B cell (primary cell): ENCODE measurements at regions of chr11 and their contacts with region 1.

Region 1: GRCh38 chr11:130069684-130070108 is at the start of gene APLP2:
- DNase-seq: peak; percentile 98
- ATAC-seq: peak; percentile 94
- H3K4me3 ChIP-seq: peak within 1 kb of the TSS; percentile 64 to 90 (median 81)
- H3K4me3 Mint-ChIP-seq: peak within 1 kb of the TSS; percentile 98
- H3K27ac ChIP-seq: peak within 1 kb of the TSS; percentile 58 to 73
- H3K27ac Mint-ChIP-seq: peak within 1 kb of the TSS; percentile 96
- H3K4me1 ChIP-seq: peaks cover 22 to 25% of the 10 kb centered on the region in 2 donors
- H3K4me1 Mint-ChIP-seq: peaks cover 36% of the 10 kb centered on the region
- H3K27me3 ChIP-seq: peaks cover 0 to 3% (median 0%) of the 10 kb centered on the region in 4 experiments
- H3K27me3 Mint-ChIP-seq: peaks cover 10% of the 10 kb centered on the region
- CTCF ChIP-seq: no peak
- total RNA-seq, gene APLP2: 102 and 111 TPM in 2 replicates

Region 2: DNA sequence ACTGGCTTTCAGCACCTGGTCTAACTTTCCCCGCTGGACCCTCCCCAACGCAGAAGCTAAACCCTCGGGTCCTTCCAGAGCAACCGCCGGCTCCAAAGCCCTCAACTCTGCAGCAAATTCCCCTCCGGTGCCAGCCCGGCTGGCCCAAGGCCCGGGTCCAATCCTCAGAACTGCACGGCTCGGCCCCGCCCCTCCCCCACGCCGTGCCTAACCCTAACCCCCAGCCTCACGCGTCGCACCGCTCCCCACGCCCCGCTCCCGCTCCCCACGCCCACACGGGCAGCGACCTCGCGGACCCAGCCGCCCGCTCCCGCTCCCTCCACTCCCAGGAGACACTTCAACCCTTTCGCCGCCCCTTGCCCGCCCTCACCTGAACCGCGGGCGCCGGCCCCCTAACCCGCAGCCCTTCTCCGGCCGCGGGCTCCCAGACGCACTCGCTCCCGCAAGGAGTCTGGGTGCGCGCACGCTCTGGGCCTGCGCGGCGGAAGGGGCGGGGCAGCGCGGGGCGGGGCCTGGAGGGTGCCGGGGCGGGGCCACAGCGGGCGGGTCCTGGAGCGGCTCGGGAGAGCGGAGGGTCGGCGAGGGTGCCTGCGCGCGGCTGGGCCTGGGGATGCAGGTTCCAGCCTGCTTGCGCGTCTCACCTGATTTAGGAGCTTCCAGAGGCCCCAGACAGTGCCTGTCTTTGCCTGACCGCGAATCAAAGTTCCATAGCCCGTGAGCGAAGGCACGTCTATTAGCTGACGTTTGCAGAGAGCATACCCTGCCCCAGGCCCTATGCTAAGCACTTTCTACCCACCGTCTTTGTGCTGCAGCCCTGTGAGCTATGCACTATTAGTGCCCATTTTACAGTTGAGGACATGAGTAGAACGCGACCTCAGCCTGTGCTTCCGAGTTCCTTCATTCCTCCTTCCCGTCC is 174.3 kb before region 1 on chr11 and contains the start of gene NFRKB:
- CTCF ChIA-PET with region 1: no interaction called
- POLR2A ChIA-PET with region 1: no interaction called
- intact Hi-C with region 1: loop called (anchors 1 kb)
- DNase-seq: peak; percentile 86
- ATAC-seq: peak; percentile 97
- H3K4me3 ChIP-seq: peak within 1 kb of the TSS; percentile 71 to 92 (median 79)
- H3K4me3 Mint-ChIP-seq: peak within 1 kb of the TSS; percentile 92
- H3K27ac ChIP-seq: peak within 1 kb of the TSS; percentile 35 to 53
- H3K27ac Mint-ChIP-seq: peak within 1 kb of the TSS; percentile 82
- H3K4me1 ChIP-seq: peaks cover 10 to 14% of the 10 kb centered on the region in 2 donors
- H3K4me1 Mint-ChIP-seq: peaks cover 22% of the 10 kb centered on the region
- H3K27me3 ChIP-seq: no peaks in the 10 kb centered on the region
- H3K27me3 Mint-ChIP-seq: no peaks in the 10 kb centered on the region
- CTCF ChIP-seq: no peak
- total RNA-seq, gene NFRKB: 36.9 and 40.4 TPM in 2 replicates

Region 3: DNA sequence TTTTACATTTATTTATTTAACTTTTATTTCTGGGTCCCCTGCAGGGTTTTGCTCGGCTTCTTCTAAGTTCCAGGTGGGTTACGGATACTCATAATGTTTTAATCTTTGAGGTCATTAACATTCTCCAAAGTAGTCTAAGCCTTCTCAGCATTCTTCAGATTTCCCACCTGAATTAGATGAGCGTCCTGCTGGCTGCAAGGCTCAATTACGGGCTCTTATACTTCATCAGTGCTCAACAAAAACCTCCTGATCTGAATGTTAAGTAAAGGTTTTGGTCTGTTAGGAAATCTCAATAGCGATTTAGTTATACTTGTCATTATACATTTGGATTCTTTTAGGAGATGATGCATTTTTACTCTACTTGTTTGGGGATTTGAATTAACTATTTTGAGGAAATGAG is 147.0 kb before region 1 on chr11:
- CTCF ChIA-PET with region 1: interaction called, 5 read pairs
- POLR2A ChIA-PET with region 1: no interaction called
- intact Hi-C with region 1: loop called (anchors 2 kb)
- DNase-seq: no peak
- ATAC-seq: no peak
- H3K4me3 ChIP-seq: no peak overlapping the region
- H3K4me3 Mint-ChIP-seq: no peak overlapping the region
- H3K27ac ChIP-seq: no peak overlapping the region
- H3K27ac Mint-ChIP-seq: no peak overlapping the region
- H3K4me1 ChIP-seq: peaks cover 0 to 8% of the 10 kb centered on the region in 2 donors
- H3K4me1 Mint-ChIP-seq: peaks cover 4% of the 10 kb centered on the region
- H3K27me3 ChIP-seq: no peaks in the 10 kb centered on the region
- H3K27me3 Mint-ChIP-seq: no peaks in the 10 kb centered on the region
- CTCF ChIP-seq: no peak

Region 4: DNA sequence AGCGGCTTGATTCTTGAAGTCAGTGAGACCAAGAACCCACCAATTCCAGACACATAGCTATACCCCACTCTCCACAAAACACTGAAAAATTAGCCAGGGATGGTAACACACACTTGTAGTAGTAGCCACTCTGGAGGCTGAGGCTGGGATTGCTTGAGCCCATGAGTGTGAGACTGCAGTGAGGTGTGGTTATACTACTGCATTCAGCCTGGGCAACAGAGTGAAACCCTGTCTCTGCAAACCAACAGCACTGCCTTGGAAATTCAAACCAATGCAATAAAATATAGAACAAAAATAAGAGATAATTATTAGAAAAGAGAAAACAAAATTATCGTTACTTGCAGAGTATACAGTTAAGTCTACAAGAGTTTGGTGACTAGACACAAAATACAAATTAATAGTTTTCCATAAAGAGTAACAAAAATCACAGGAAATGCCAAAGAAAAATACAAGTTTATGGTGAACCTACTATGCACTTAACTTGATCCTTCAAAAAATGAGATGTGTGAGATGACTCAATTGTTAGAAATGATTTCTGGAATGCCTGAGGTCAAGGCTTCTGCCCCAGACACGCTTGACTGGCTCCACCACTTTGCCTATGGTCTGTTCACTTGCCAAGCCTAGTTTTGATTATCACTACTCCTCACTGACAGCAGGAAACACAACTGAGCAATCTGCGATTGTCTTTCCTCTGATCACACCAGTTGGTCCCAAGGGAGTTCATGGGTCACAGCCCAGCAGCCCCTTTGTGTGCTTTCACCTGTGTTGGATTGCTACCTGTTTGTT is 46.7 kb before region 1 on chr11:
- CTCF ChIA-PET with region 1: no interaction called
- POLR2A ChIA-PET with region 1: no interaction called
- intact Hi-C with region 1: no loop called
- DNase-seq: peak; percentile 74
- ATAC-seq: peak; percentile 85
- H3K4me3 ChIP-seq: no peak overlapping the region
- H3K4me3 Mint-ChIP-seq: peak overlapping the region; percentile 0
- H3K27ac ChIP-seq: no peak overlapping the region
- H3K27ac Mint-ChIP-seq: no peak overlapping the region
- H3K4me1 ChIP-seq: peaks cover 7 to 9% of the 10 kb centered on the region in 2 donors
- H3K4me1 Mint-ChIP-seq: peaks cover 13% of the 10 kb centered on the region
- H3K27me3 ChIP-seq: peaks cover 0 to 48% (median 26%) of the 10 kb centered on the region in 4 experiments
- H3K27me3 Mint-ChIP-seq: peaks cover 59% of the 10 kb centered on the region
- CTCF ChIP-seq: no peak

Region 5: GRCh38 chr11:130118636-130119387 is 49.1 kb after region 1 on chr11:
- CTCF ChIA-PET with region 1: interaction called, 7 read pairs
- POLR2A ChIA-PET with region 1: interaction called, 4 read pairs
- intact Hi-C with region 1: loop called (anchors 2 kb)
- DNase-seq: peak; percentile 76
- ATAC-seq: peak; percentile 72
- H3K4me3 ChIP-seq: peak overlapping the region in 4 of 5 experiments; percentile 1 to 53 (median 22)
- H3K4me3 Mint-ChIP-seq: peak overlapping the region; percentile 48
- H3K27ac ChIP-seq: peak overlapping the region; percentile 75 to 77
- H3K27ac Mint-ChIP-seq: peak overlapping the region; percentile 73
- H3K4me1 ChIP-seq: peaks cover 87 to 93% of the 10 kb centered on the region in 2 donors
- H3K4me1 Mint-ChIP-seq: peaks cover 89% of the 10 kb centered on the region
- H3K27me3 ChIP-seq: no peaks in the 10 kb centered on the region
- H3K27me3 Mint-ChIP-seq: no peaks in the 10 kb centered on the region
- CTCF ChIP-seq: no peak

Region 6: GRCh38 chr11:130139401-130139800 is 69.7 kb after region 1 on chr11:
- CTCF ChIA-PET with region 1: no interaction called
- POLR2A ChIA-PET with region 1: no interaction called
- intact Hi-C with region 1: no loop called
- DNase-seq: no peak
- ATAC-seq: no peak
- H3K4me3 ChIP-seq: no peak overlapping the region
- H3K4me3 Mint-ChIP-seq: no peak overlapping the region
- H3K27ac ChIP-seq: no peak overlapping the region
- H3K27ac Mint-ChIP-seq: no peak overlapping the region
- H3K4me1 ChIP-seq: no peaks in the 10 kb centered on the region
- H3K4me1 Mint-ChIP-seq: no peaks in the 10 kb centered on the region
- H3K27me3 ChIP-seq: no peaks in the 10 kb centered on the region
- H3K27me3 Mint-ChIP-seq: no peaks in the 10 kb centered on the region
- CTCF ChIP-seq: no peak

Region 7: DNA sequence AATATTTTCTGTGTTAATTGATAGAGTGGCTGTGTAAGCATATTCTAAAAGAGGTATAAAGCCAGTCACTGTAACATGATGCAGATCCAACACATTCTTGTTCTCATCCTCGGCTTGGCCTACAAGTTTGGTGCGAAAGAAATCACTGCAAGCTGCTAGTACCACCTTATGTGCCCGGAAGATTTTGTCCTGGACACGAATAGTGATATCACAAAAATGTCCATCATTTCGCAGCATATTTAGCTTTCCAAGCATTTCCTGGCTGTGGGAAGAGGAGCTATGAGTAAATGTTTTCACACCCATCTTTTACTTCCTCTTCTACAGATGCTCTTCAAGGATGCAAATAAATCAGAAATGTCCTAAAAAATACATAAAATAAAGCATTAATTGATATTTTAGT is 191.9 kb after region 1 on chr11:
- CTCF ChIA-PET with region 1: no interaction called
- POLR2A ChIA-PET with region 1: no interaction called
- intact Hi-C with region 1: no loop called
- DNase-seq: no peak
- ATAC-seq: no peak
- H3K4me3 ChIP-seq: no peak overlapping the region
- H3K4me3 Mint-ChIP-seq: no peak overlapping the region
- H3K27ac ChIP-seq: no peak overlapping the region
- H3K27ac Mint-ChIP-seq: no peak overlapping the region
- H3K4me1 ChIP-seq: peaks cover 15 to 20% of the 10 kb centered on the region in 2 donors
- H3K4me1 Mint-ChIP-seq: peaks cover 51% of the 10 kb centered on the region
- H3K27me3 ChIP-seq: no peaks in the 10 kb centered on the region
- H3K27me3 Mint-ChIP-seq: no peaks in the 10 kb centered on the region
- CTCF ChIP-seq: no peak